AG04450 (cell line): ENCODE measurements at regions of chr2 and their contacts with region 1.

Region 1: DNA sequence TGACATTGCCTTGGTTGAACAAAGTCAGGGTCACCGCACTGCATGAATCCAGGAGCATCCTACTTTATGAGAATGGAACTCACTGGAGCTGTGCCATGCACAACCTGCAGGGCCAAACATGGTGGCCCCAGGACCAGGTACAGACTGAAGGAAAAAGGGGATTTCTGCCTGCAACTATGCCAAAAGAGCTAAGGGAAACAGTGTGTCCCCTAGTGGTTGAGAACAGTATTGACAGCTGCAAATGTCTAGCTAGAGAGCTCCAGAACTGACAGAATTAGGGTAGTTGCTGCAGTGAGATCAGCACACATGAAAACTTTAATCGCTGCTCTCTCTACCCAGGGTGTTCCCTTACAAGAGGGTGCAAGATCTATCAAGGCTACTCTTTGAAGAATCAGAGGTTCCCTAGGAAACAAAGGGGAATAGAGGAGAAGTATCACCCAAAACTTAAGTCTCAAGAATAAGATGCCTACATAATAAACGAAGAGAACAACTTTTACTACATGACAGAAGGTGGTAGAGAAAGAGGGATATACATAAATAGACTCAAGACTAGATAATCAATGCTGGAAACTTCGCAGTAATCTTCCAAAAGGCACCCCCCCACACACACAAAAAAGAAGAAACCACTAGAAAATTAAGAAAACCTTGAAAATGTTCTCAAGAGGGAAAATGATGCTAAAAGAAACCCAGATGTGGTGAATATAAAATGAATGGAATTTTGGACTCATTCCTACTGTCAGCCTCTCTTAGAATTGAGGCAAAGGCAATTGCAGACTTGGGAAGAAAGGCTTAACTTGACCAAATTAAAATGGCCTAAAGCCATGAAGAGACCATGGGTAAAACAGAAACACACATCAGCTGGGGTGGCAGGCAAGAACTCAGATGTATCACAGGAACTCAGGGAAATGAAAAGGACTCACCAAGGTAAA is 43.6 kb upstream of the IHH start:
- DNase-seq: no peak
- H3K4me3 ChIP-seq: no peak overlapping the region
- H3K27ac ChIP-seq: no peak overlapping the region
- H3K27me3 ChIP-seq: no peaks in the 10 kb centered on the region
- CTCF ChIP-seq: peak; percentile 84

Region 2: DNA sequence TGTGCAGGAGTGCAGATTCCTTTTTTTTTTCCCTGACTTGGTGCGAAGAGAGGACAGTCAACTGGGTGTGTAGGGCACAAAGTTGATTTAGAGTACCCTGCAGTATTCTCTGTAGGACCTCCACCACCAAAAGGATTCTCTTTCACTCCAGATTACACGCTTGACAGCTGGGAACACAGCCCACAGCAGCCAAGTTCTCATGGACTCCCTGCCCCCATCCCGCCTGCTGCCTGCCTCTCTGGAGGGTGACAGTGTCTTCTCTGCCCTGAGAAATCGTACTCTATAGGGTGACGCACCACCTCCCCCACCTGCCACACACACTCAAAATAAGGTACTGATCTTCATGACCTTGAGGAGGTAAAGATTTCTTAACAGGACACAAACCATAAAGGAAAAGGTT is 17.0 kb before region 1 on chr2:
- CTCF ChIA-PET with region 1: interaction called, 17 read pairs
- POLR2A ChIA-PET with region 1: no interaction called
- DNase-seq: no peak
- H3K4me3 ChIP-seq: no peak overlapping the region
- H3K27ac ChIP-seq: no peak overlapping the region
- H3K27me3 ChIP-seq: no peaks in the 10 kb centered on the region
- CTCF ChIP-seq: no peak